CD8-positive, alpha-beta T cell (primary cell): ENCODE measurements at regions of chr19 and their contacts with region 1.

Region 1: DNA sequence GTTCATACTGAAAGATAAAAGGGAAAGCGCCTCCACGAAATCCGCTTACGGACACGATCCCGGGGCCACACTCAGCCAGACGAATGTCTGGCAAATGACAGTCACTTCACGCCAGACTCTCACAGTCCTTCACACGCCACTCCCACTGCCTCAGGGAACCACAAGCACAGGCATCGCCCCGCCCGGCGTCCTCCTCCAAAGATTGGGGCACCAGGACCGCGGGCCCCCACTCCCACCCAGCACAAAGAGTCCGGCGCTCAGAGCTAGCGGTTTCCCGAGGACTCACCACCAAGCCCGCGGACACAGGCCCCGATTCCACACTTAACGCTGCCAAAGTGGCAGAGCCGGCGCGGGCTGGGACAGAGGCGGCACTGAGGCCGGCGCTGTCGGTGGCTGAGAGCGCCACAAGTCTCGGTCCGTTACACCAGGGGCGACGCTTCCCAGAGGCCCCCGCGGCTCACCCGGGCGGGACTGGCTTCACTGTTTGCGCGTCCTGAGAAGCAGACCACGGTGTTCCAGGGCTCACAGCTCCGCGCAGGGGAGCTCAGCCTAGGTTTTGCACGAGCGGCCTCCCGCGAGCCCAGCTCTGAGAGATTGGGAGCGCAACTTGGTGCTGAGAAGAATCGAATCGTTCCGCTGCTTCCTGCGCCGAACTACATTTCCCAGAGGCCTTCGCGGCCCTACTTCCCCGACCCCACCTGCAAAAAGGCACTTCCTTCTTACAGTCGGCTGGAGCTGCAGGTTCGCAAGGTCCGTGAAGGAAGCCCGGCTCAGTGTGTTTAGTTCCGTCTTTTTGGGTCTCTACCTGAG is at the start of gene ZNF569:
- DNase-seq: peak; percentile 79 to 96 (median 89)
- ATAC-seq: peak; percentile 65
- H3K4me3 ChIP-seq: peak within 1 kb of the TSS; percentile 88 to 95
- H3K4me3 Mint-ChIP-seq: peak within 1 kb of the TSS; percentile 93
- H3K27ac ChIP-seq: peak within 1 kb of the TSS; percentile 71 to 90
- H3K27ac Mint-ChIP-seq: peak within 1 kb of the TSS; percentile 94
- H3K4me1 ChIP-seq: peaks cover 17% of the 10 kb centered on the region
- H3K4me1 Mint-ChIP-seq: peaks cover 41% of the 10 kb centered on the region
- H3K27me3 ChIP-seq: no peaks in the 10 kb centered on the region
- H3K27me3 Mint-ChIP-seq: no peaks in the 10 kb centered on the region
- CTCF ChIP-seq: no peak
- total RNA-seq, gene ZNF569: 11.2 to 11.8 TPM

Region 2: GRCh38 chr19:36605101-36605876 is 861.7 kb before region 1 on chr19 and contains the start of gene ZNF382:
- CTCF ChIA-PET with region 1: no interaction called
- POLR2A ChIA-PET with region 1: no interaction called
- intact Hi-C with region 1: loop called in 1 of 2 experiments (anchors 1 kb)
- DNase-seq: peak; percentile 72 to 91 (median 86)
- ATAC-seq: peak; percentile 65
- H3K4me3 ChIP-seq: peak within 1 kb of the TSS; percentile 89 to 95
- H3K4me3 Mint-ChIP-seq: peak within 1 kb of the TSS; percentile 91
- H3K27ac ChIP-seq: peak within 1 kb of the TSS; percentile 89 to 98
- H3K27ac Mint-ChIP-seq: peak within 1 kb of the TSS; percentile 97
- H3K4me1 ChIP-seq: peaks cover 11% of the 10 kb centered on the region
- H3K4me1 Mint-ChIP-seq: peaks cover 29% of the 10 kb centered on the region
- H3K27me3 ChIP-seq: no peaks in the 10 kb centered on the region
- H3K27me3 Mint-ChIP-seq: no peaks in the 10 kb centered on the region
- CTCF ChIP-seq: no peak
- total RNA-seq, gene ZNF382: 4.6 to 4.7 TPM

Region 3: DNA sequence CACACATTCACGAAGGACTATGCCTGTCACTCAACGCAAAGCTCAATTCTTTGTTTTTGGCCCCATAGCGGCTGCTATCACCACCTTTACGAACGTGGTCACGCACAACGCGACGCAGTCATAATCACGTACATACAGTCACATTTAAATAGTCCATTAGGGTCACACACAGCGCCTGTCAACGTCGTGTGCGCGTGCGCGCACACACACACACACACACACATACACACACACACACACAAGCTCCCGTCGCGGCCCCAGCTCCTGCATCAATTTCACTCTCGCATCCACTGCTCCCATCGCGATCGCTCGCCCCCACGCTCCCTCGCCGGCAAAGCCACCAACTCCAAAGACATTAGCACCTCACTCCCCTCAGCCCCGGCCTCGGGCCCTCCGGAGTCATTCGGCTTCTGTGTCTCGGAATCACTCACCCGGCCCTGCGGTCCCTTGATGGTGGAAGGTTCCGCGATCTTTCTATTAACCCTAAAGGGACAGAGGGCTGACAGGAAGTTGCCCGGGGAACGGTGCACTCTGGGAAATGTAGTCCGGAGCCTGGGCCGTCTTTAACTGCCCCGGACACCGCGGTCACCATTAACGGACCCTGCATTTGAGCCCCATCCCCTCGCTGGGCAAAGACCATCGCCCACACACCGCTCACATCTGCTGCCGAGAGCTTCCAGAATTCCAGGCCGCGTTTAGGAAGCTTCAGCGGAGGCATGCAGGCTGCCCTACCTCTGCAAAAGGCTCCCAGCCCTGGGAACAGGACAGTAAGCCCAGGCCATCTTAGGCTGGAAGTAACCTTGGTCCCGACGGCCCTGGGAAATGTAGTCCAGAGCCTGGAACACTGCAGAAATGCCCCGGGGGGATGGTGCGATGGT is 628.9 kb before region 1 on chr19 and contains the start of gene ZNF790:
- CTCF ChIA-PET with region 1: no interaction called
- POLR2A ChIA-PET with region 1: interaction called, 3 read pairs
- intact Hi-C with region 1: loop called in 1 of 2 experiments (anchors 5 kb)
- DNase-seq: peak; percentile 62 to 92 (median 81)
- ATAC-seq: peak; percentile 87
- H3K4me3 ChIP-seq: peak within 1 kb of the TSS; percentile 86 to 91
- H3K4me3 Mint-ChIP-seq: no peak within 1 kb of the TSS
- H3K27ac ChIP-seq: peak within 1 kb of the TSS; percentile 88 to 97
- H3K27ac Mint-ChIP-seq: no peak within 1 kb of the TSS
- H3K4me1 ChIP-seq: peaks cover 17% of the 10 kb centered on the region
- H3K4me1 Mint-ChIP-seq: peaks cover 21% of the 10 kb centered on the region
- H3K27me3 ChIP-seq: no peaks in the 10 kb centered on the region
- H3K27me3 Mint-ChIP-seq: no peaks in the 10 kb centered on the region
- CTCF ChIP-seq: no peak
- total RNA-seq, gene ZNF790: 2.1 to 3.6 TPM

Region 4: GRCh38 chr19:37077934-37078725 is 388.9 kb before region 1 on chr19 and contains the start of gene ZNF420:
- CTCF ChIA-PET with region 1: no interaction called
- POLR2A ChIA-PET with region 1: no interaction called
- intact Hi-C with region 1: loop called in 1 of 2 experiments (anchors 1 kb)
- DNase-seq: peak; percentile 78 to 96 (median 89)
- ATAC-seq: peak; percentile 88
- H3K4me3 ChIP-seq: peak within 1 kb of the TSS; percentile 60 to 71
- H3K4me3 Mint-ChIP-seq: peak within 1 kb of the TSS; percentile 89
- H3K27ac ChIP-seq: peak within 1 kb of the TSS; percentile 56 to 82
- H3K27ac Mint-ChIP-seq: peak within 1 kb of the TSS; percentile 92
- H3K4me1 ChIP-seq: peaks cover 9% of the 10 kb centered on the region
- H3K4me1 Mint-ChIP-seq: peaks cover 34% of the 10 kb centered on the region
- H3K27me3 ChIP-seq: no peaks in the 10 kb centered on the region
- H3K27me3 Mint-ChIP-seq: no peaks in the 10 kb centered on the region
- CTCF ChIP-seq: no peak
- total RNA-seq, gene ZNF420: 7.0 to 8.9 TPM

Region 5: DNA sequence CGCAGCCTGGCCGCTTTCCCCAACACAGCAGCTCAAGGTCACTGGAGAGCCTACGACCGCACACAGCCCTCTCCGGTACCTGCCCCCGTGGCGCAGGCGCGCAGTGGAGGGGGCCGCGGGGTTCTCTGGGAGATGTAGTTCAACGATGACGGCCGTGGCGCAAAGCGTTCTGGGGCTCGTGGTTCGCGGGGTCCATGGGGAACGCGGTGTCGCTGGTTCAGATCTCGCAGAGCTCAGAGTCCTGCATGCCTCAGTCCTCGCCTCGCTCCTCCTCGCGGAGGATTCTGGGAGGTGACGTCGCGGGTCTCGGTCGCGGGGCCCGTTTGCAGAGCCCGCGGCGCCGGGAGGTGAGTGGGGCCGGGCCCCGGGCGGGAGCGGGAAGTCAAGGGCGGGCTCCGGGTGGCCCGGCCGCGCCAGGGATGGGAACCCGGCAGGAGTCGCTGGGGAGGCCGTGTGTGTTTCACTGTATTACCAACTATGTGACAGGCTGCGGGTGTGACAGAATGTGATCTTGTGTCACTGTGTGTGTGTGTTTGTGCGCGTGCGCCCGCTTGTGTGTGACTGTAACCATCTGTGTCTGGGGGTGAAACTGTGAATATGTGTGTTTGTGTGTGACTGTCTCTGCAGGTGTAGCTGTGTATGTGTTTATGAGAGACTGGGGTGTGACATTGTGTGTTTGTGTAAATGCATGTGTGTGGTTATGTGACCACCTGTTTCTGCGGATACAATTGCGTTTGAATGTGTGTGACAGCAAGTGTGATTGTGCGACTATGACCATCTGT is 95.9 kb before region 1 on chr19 and contains the start of gene ZNF527:
- CTCF ChIA-PET with region 1: interaction called, 3 read pairs
- POLR2A ChIA-PET with region 1: interaction called, 14 read pairs
- intact Hi-C with region 1: loop called (anchors 1 kb)
- DNase-seq: peak; percentile 94 to 98 (median 97)
- ATAC-seq: peak; percentile 92
- H3K4me3 ChIP-seq: peak within 1 kb of the TSS; percentile 80 to 95
- H3K4me3 Mint-ChIP-seq: peak within 1 kb of the TSS; percentile 99
- H3K27ac ChIP-seq: peak within 1 kb of the TSS; percentile 82 to 90
- H3K27ac Mint-ChIP-seq: peak within 1 kb of the TSS; percentile 96
- H3K4me1 ChIP-seq: peaks cover 7% of the 10 kb centered on the region
- H3K4me1 Mint-ChIP-seq: peaks cover 20% of the 10 kb centered on the region
- H3K27me3 ChIP-seq: no peaks in the 10 kb centered on the region
- H3K27me3 Mint-ChIP-seq: no peaks in the 10 kb centered on the region
- CTCF ChIP-seq: no peak
- total RNA-seq, gene ZNF527: 12.9 to 14.2 TPM

Region 6: DNA sequence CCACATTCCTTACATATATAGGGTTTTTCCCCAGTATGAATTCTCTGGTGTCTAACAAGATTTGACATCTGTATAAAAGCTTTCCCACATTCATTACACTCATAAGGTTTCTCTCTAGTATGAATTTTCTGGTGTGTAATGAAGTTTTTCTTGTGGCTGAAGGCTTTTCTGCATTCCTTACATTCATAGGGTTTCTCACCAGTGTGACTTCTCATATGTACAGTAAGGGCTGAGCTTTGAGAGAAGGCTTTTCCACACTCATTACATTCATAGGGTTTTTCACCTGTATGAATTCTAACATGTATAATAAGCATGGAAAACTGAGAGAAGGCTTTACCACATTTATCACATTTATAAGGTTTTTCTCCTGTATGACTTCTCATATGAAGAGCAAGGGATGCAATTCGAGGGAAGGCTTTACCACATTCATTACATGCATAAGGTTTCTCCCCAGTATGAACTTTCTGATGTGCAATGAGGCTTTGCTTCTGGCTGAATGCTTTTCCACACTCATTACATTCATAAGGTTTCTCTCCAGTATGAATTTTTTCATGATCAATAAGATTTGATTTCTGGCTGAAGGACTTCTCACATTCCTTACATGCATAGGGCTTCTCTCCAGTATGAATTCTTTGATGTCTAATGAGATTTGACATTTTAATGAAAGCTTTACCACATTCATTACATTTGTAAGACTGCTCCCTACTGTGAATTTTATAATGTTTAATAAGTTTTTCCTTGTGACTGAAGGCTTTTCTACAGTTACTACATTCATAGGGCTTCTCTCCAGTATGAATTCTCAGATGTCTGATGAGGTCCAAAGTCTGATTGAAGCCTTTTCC is 53.5 kb before region 1 on chr19:
- CTCF ChIA-PET with region 1: no interaction called
- POLR2A ChIA-PET with region 1: no interaction called
- intact Hi-C with region 1: no loop called
- DNase-seq: no peak
- ATAC-seq: no peak
- H3K4me3 ChIP-seq: no peak overlapping the region
- H3K4me3 Mint-ChIP-seq: no peak overlapping the region
- H3K27ac ChIP-seq: no peak overlapping the region
- H3K27ac Mint-ChIP-seq: no peak overlapping the region
- H3K4me1 ChIP-seq: no peaks in the 10 kb centered on the region
- H3K4me1 Mint-ChIP-seq: no peaks in the 10 kb centered on the region
- H3K27me3 ChIP-seq: no peaks in the 10 kb centered on the region
- H3K27me3 Mint-ChIP-seq: no peaks in the 10 kb centered on the region
- CTCF ChIP-seq: no peak

Region 7: DNA sequence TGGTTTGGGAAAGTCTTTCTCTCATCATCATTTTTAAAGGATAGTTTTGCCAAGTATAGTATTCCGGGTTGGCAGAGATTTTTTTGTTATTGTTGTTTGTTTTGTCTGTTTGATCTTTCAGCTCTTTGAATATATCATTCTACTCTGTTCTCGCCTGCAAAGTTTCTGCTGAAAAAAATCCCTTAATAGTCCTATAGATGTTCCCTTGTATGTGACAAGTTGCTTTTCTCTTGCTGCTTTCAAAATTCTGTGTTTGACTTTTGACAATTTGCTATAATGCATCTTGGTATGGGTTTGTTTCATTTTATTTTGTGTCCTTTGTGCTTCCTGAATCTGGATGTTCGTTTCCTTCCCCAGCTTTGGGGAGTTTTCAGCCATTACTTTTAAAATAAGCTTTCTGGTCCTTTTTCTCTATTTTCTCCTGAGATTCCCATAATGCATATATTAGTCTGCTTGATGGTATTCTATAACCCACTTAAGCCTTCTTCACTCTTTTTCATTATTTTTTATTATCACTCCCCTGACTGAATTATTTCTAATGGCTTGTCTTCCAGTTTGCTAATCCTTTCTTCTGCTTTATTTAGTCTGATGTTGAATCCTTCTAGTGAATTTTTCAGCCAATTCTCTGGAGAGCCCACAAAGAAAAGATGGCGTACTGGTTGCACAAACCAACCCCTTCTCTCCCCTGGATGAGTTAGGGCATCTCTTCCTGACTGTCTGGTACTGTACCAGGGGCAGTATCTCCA is 14.3 kb before region 1 on chr19:
- CTCF ChIA-PET with region 1: no interaction called
- POLR2A ChIA-PET with region 1: no interaction called
- intact Hi-C with region 1: no loop called
- DNase-seq: no peak
- ATAC-seq: no peak
- H3K4me3 ChIP-seq: peak overlapping the region in 1 of 2 experiments; percentile 20
- H3K4me3 Mint-ChIP-seq: no peak overlapping the region
- H3K27ac ChIP-seq: no peak overlapping the region
- H3K27ac Mint-ChIP-seq: no peak overlapping the region
- H3K4me1 ChIP-seq: no peaks in the 10 kb centered on the region
- H3K4me1 Mint-ChIP-seq: no peaks in the 10 kb centered on the region
- H3K27me3 ChIP-seq: no peaks in the 10 kb centered on the region
- H3K27me3 Mint-ChIP-seq: no peaks in the 10 kb centered on the region
- CTCF ChIP-seq: no peak

Region 8: GRCh38 chr19:37691881-37692504 is 225.0 kb after region 1 on chr19:
- CTCF ChIA-PET with region 1: no interaction called
- POLR2A ChIA-PET with region 1: interaction called, 4 read pairs
- intact Hi-C with region 1: loop called in 1 of 2 experiments (anchors 1 kb)
- DNase-seq: peak; percentile 54 to 90 (median 80)
- ATAC-seq: peak; percentile 92
- H3K4me3 ChIP-seq: peak overlapping the region; percentile 58 to 73
- H3K4me3 Mint-ChIP-seq: peak overlapping the region; percentile 96
- H3K27ac ChIP-seq: peak overlapping the region; percentile 65 to 74
- H3K27ac Mint-ChIP-seq: peak overlapping the region; percentile 96
- H3K4me1 ChIP-seq: no peaks in the 10 kb centered on the region
- H3K4me1 Mint-ChIP-seq: peaks cover 13% of the 10 kb centered on the region
- H3K27me3 ChIP-seq: no peaks in the 10 kb centered on the region
- H3K27me3 Mint-ChIP-seq: no peaks in the 10 kb centered on the region
- CTCF ChIP-seq: no peak

Region 9: DNA sequence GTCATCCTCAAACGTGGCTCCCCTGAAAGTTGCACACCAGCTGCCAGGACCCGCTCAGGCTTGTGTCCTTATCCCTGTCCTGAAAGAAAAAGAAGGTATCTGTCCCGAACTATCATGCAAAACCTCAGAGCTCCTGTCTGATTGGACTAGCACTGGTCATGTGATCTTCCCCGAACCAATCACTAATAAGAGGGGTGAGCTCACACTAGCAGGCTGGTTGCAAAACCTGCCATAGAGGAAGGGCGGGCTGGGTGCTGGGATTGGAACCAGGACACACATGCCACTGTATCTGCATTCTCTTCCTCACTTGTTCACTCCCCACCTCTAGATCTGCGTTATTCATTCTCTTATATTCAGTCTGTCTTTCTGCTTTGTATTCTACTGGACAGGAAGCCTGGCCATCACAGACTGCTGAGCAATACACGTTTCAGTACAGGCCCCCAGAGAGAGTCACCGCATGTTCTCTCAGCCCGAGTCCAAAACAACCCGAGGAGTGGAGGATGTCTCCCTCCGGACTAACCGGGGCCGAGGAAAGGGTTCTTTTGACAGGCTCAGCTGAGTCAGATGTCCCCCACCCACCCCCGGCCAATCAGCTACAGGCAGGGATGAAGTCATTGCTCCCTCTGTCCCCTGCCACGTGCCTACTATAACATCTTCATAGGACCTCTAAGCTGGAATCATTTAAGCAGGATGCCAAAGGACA is 537.7 kb after region 1 on chr19:
- CTCF ChIA-PET with region 1: no interaction called
- POLR2A ChIA-PET with region 1: no interaction called
- intact Hi-C with region 1: no loop called
- DNase-seq: peak in 1 of 9 experiments; percentile 23
- ATAC-seq: no peak
- H3K4me3 ChIP-seq: no peak overlapping the region
- H3K4me3 Mint-ChIP-seq: no peak overlapping the region
- H3K27ac ChIP-seq: no peak overlapping the region
- H3K27ac Mint-ChIP-seq: no peak overlapping the region
- H3K4me1 ChIP-seq: peaks cover 9% of the 10 kb centered on the region
- H3K4me1 Mint-ChIP-seq: peaks cover 12% of the 10 kb centered on the region
- H3K27me3 ChIP-seq: no peaks in the 10 kb centered on the region
- H3K27me3 Mint-ChIP-seq: no peaks in the 10 kb centered on the region
- CTCF ChIP-seq: no peak

Region 10: GRCh38 chr19:38335949-38336637 is 869.1 kb after region 1 on chr19:
- CTCF ChIA-PET with region 1: no interaction called
- POLR2A ChIA-PET with region 1: no interaction called
- intact Hi-C with region 1: loop called in 1 of 2 experiments (anchors 2 kb)
- DNase-seq: peak; percentile 85 to 96 (median 95)
- ATAC-seq: peak; percentile 66
- H3K4me3 ChIP-seq: peak overlapping the region; percentile 85 to 94
- H3K4me3 Mint-ChIP-seq: peak overlapping the region; percentile 89
- H3K27ac ChIP-seq: peak overlapping the region; percentile 84 to 95
- H3K27ac Mint-ChIP-seq: peak overlapping the region; percentile 97
- H3K4me1 ChIP-seq: peaks cover 10% of the 10 kb centered on the region
- H3K4me1 Mint-ChIP-seq: peaks cover 17% of the 10 kb centered on the region
- H3K27me3 ChIP-seq: no peaks in the 10 kb centered on the region
- H3K27me3 Mint-ChIP-seq: no peaks in the 10 kb centered on the region
- CTCF ChIP-seq: no peak